ENCODE measurements at regions of chr6 and their contacts with region 1.

Region 1: GRCh38 chr6:158704181-158704822 is 54.4 kb downstream of the SYTL3 start:
- DNase-seq: peak; percentile 80 to 93 (median 86)
- ATAC-seq: peak; percentile 72 to 89 (median 86)
- H3K4me3 ChIP-seq: peak overlapping the region in 10 of 12 donors; percentile 15 to 55 (median 40)
- H3K27ac ChIP-seq: peak overlapping the region; percentile 46 to 90 (median 74)
- H3K4me1 ChIP-seq: peaks cover 6 to 53% (median 38%) of the 10 kb centered on the region in 12 donors
- H3K27me3 ChIP-seq: no peaks in the 10 kb centered on the region
- CTCF ChIP-seq: peak; percentile 97 to 100 (median 99)
- POLR2A ChIP-seq: peak in 1 of 2 donors; percentile 1

Region 2: DNA sequence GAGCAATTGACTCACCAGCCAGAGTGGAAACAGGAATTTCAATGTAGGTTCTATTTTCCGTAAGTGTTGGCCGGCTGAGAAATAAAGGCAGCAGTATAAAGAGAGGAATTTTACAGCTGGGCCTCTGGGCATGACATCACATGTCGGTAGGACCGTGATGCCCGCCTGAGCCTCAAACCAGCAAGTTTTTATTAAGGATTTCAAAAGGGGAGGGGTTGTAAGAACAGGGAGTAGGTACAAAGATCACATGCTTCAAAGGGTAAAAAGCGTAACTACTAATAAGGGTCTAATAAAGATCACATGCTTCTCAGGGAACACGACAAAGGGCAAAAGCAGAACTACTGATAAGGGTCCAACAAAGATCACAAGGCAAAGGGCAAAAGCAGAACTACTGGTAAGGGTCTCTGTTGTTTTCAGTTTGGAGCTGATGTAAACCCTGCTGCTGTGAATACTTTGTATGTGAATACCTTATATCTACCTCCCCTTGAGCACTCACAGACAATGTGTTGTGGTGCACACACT is 401.0 kb before region 1 on chr6:
- intact Hi-C with region 1: no loop called
- DNase-seq: no peak
- ATAC-seq: no peak
- H3K4me3 ChIP-seq: no peak overlapping the region
- H3K27ac ChIP-seq: no peak overlapping the region
- H3K4me1 ChIP-seq: peaks cover 0 to 14% (median 5%) of the 10 kb centered on the region in 12 donors
- H3K27me3 ChIP-seq: no peaks in the 10 kb centered on the region
- CTCF ChIP-seq: no peak
- POLR2A ChIP-seq: no peak

Region 3: GRCh38 chr6:158793432-158793831 is 89.1 kb after region 1 on chr6:
- intact Hi-C with region 1: loop called in 1 of 10 experiments (anchors 10 kb)
- DNase-seq: no peak
- ATAC-seq: peak; percentile 29 to 67 (median 55)
- H3K4me3 ChIP-seq: no peak overlapping the region
- H3K27ac ChIP-seq: peak overlapping the region in 1 of 12 donors; percentile 15
- H3K4me1 ChIP-seq: peaks cover 0 to 77% (median 27%) of the 10 kb centered on the region in 12 donors
- H3K27me3 ChIP-seq: no peaks in the 10 kb centered on the region
- CTCF ChIP-seq: peak in 11 of 12 donors; percentile 12 to 57 (median 38)
- POLR2A ChIP-seq: no peak

Region 4: DNA sequence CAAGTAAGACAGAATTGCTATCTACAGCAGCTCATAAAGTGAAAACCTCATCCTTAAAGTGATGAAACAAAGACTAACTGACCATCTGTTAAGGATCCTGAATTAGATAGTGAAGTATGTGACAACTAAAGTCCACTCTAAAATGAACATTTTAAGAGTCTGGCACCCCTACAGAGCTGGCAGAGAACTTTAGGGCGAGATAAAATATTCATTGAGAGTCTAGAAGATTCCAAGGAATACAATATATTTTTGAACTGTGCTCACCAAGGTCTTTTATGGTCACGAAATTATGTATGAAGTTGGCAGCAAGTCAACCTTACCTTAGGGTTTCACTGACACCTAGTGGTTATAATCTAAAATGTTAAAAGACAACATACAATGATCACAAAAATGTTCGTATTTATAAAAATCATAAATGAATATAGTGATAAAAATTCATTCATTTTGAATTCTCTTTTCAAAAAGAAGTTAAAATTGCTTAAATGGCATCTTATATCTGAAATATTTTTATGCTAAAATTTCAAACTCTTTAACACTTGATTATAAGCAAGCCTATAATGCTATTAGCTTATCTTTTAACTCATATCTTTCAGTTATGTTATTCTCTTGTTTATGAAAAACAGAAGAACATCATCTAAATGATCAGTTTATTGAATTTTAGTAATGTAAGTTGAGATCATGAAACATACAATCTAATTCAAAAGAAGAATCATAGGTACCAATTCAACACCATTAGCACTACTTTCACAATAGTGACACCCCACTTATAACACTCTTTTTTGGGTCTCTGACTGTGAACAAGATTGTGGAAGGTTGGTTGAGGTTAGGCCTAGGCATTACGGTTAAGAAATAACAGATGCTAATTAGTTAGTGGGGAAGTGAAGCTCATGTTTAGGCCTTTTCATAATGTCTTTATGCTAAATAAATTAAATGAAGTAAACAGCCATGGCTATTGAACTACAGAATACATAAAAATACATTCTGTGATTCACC is 268.2 kb after region 1 on chr6:
- intact Hi-C with region 1: loop called (anchors 1 to 5 kb)
- DNase-seq: no peak
- ATAC-seq: peak in 1 of 4 donors; percentile 60
- H3K4me3 ChIP-seq: no peak overlapping the region
- H3K27ac ChIP-seq: no peak overlapping the region
- H3K4me1 ChIP-seq: peaks cover 0 to 5% (median 0%) of the 10 kb centered on the region in 12 donors
- H3K27me3 ChIP-seq: no peaks in the 10 kb centered on the region
- CTCF ChIP-seq: peak; percentile 34 to 73 (median 57)
- POLR2A ChIP-seq: no peak

Region 5: DNA sequence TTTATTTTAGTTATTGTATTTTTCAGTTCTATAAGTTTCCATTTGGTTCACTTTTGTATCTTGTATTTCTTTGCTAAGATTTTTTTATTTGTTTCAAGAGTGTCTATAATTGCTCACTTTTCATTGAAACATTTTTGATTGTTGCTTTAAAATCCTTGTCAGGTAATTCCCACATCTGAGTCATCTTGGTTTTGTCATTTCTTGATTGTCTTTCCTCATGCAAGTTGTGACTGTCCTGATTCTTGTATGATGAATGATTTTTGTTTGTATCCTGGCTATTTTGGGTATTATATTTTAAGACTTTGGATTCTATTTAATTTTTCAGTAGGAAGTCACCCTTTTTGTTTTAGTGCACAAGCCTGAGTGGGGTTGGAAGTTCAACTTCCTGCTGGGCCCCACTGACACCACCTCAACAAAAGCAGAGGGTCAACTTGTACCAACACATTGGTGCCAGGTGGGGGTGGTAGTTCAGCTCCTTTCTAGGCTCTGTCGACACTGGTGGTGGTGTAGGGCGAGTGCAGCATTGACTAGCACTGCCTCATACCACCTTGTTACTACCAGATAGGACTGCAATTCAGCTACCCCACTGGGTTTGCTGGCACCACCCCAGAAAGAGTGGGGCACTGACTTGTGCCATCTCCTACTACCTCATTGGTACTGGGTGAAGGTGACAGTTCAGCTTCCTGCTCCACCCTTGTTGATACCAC is 286.9 kb after region 1 on chr6:
- intact Hi-C with region 1: no loop called
- DNase-seq: no peak
- ATAC-seq: no peak
- H3K4me3 ChIP-seq: no peak overlapping the region
- H3K27ac ChIP-seq: no peak overlapping the region
- H3K4me1 ChIP-seq: peaks cover 0 to 8% (median 0%) of the 10 kb centered on the region in 12 donors
- H3K27me3 ChIP-seq: no peaks in the 10 kb centered on the region
- CTCF ChIP-seq: no peak
- POLR2A ChIP-seq: no peak

Region 6: DNA sequence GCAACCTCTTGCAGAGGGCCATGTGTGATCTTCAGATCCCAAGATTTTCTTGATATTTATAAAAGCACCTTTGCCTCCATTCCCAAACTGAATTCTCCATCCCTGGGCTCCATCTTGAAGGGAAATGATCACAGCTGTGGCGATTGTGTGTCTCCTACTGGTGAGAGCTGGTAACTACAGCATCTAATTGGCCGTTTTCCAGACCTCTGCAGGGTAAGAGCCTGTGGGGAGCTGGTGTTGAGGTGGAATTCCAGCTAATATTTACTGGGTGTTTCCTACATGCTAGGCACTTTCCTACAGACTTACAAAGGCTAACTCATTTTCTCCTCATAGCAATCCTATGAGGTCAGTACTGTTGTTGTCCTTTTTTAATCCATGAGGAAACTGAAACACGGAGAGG is 405.7 kb after region 1 on chr6:
- intact Hi-C with region 1: loop called in 3 of 10 experiments (anchors 10 kb)
- DNase-seq: no peak
- ATAC-seq: no peak
- H3K4me3 ChIP-seq: no peak overlapping the region
- H3K27ac ChIP-seq: no peak overlapping the region
- H3K4me1 ChIP-seq: peaks cover 0 to 61% (median 6%) of the 10 kb centered on the region in 12 donors
- H3K27me3 ChIP-seq: no peaks in the 10 kb centered on the region
- CTCF ChIP-seq: peak in 9 of 12 donors; percentile 24 to 53 (median 48)
- POLR2A ChIP-seq: no peak

Region 7: DNA sequence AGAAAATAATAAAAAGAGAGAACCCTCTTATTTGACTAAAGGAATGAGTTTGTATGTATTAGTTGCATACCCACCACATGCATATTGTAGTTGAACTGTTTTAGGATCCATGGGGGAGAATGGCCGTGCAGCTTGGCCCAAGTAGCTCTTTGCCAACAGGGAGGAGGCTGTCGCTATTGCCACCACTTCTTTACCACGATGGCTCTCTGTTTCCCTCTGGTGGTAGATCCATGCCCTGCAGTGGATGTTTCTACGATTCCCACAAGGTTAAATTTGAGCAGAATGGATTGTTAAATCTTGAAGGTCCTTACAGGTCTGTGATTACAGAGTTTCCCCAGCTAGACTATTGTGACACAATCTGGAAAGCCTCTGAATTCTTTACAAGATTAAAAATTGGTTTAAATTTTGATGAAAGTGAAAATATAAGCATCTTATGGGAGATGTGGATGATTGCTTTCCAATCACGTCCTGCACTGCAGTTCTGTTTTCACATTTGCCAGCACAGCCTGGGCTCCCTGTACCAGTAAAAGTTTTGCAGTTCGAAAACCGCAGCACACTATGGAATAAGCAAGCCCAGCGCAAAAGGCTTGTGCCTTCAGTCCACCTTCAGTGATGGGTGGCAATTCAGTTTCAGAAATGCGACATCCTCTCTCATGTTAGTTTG is 430.5 kb after region 1 on chr6:
- intact Hi-C with region 1: loop called in 2 of 10 experiments (anchors 10 kb)
- DNase-seq: peak in 4 of 5 donors; percentile 45 to 62 (median 56)
- ATAC-seq: peak; percentile 41 to 77 (median 74)
- H3K4me3 ChIP-seq: no peak overlapping the region
- H3K27ac ChIP-seq: no peak overlapping the region
- H3K4me1 ChIP-seq: peaks cover 0 to 4% (median 0%) of the 10 kb centered on the region in 12 donors
- H3K27me3 ChIP-seq: peaks cover 0 to 15% (median 0%) of the 10 kb centered on the region in 9 donors
- CTCF ChIP-seq: peak; percentile 79 to 97 (median 86)
- POLR2A ChIP-seq: no peak